ENCODE measurements at regions of chr18 and their contacts with region 1.

Region 1: DNA sequence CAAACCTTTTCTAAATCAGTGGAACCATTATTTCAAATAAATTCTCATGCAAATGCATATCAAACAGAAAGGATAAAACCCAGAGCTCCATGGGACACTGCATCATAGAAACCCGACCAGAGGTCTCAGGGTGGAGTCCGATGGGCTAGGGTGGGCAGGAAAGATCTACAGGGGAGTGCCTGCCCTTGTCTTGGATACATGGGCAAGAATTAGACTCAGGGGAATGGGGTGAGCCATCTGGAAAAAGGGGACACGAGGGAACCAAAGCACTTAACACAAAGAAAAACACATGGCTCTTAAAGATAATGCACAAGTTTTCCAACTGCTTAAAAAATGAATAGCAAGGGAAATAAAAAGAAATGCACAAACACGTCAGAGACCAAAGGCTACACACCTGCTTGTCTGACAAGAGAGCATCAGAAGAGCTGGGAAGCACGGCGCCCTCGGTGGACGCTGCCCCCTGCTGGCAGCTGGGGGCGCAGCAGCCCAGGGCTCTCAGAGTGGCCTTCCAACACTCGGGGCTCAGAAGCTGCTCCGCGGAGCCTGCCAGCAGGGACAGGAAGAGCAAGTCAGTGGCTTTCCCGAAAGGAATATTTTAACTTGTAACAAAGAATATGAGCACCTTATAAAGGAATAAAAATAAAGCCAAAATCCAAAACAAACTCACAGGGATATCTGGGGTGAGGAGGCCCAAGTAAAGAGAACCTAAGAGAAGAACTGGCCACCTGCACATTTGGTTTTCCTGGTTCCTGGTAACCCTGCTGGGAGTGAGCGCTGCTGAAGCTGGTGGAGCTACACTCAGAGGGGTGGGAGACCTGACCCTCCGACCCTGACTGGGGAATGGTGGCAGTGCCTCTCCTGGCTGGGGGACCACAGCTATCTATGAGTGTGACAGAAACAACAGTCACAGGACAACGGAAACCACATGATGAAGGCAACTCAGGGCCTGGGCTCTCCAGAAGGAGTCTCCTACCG is 54.5 kb downstream of the SIGLEC15 start:
- DNase-seq: peak; percentile 85
- ATAC-seq: peak; percentile 87
- H3K4me3 Mint-ChIP-seq: no peak overlapping the region
- H3K27ac Mint-ChIP-seq: no peak overlapping the region
- H3K4me1 Mint-ChIP-seq: peaks cover 10% of the 10 kb centered on the region
- H3K27me3 Mint-ChIP-seq: no peaks in the 10 kb centered on the region

Region 2: DNA sequence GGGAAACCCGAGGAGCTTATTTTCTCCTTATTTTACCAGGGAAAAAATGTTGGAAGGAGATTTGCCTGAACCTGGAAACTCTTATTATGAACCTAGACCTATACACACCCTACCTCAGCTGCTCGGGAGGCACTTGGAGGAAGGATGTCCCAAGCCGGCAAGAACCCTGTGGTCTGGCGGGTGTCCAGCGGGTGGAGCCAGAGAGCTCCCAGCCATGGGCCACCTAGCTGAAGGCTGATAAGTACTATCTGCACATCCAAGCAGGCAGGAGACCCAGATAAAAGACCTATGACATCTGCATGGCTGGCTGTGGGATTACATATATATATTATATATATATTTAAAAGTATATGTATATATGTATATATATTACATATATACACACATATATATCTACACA is 157.1 kb before region 1 on chr18:
- CTCF ChIA-PET with region 1: interaction called, 81 read pairs
- POLR2A ChIA-PET with region 1: no interaction called
- intact Hi-C with region 1: loop called (anchors 1 kb)
- DNase-seq: peak; percentile 89
- ATAC-seq: peak; percentile 97
- H3K4me3 Mint-ChIP-seq: no peak overlapping the region
- H3K27ac Mint-ChIP-seq: no peak overlapping the region
- H3K4me1 Mint-ChIP-seq: no peaks in the 10 kb centered on the region
- H3K27me3 Mint-ChIP-seq: no peaks in the 10 kb centered on the region

Region 3: GRCh38 chr18:45730832-45731575 is 149.0 kb before region 1 on chr18:
- CTCF ChIA-PET with region 1: interaction called, 81 read pairs
- POLR2A ChIA-PET with region 1: no interaction called
- intact Hi-C with region 1: no loop called
- DNase-seq: no peak
- ATAC-seq: no peak
- H3K4me3 Mint-ChIP-seq: no peak overlapping the region
- H3K27ac Mint-ChIP-seq: no peak overlapping the region
- H3K4me1 Mint-ChIP-seq: no peaks in the 10 kb centered on the region
- H3K27me3 Mint-ChIP-seq: no peaks in the 10 kb centered on the region

Region 4: GRCh38 chr18:45860971-45861370 is 19.0 kb before region 1 on chr18:
- CTCF ChIA-PET with region 1: interaction called, 18 read pairs
- POLR2A ChIA-PET with region 1: interaction called, 3 read pairs
- intact Hi-C with region 1: no loop called
- DNase-seq: no peak
- ATAC-seq: no peak
- H3K4me3 Mint-ChIP-seq: no peak overlapping the region
- H3K27ac Mint-ChIP-seq: no peak overlapping the region
- H3K4me1 Mint-ChIP-seq: peaks cover 8% of the 10 kb centered on the region
- H3K27me3 Mint-ChIP-seq: no peaks in the 10 kb centered on the region

Region 5: GRCh38 chr18:45896991-45897390 is 17.0 kb after region 1 on chr18:
- CTCF ChIA-PET with region 1: interaction called, 12 read pairs
- POLR2A ChIA-PET with region 1: no interaction called
- intact Hi-C with region 1: no loop called
- DNase-seq: no peak
- ATAC-seq: no peak
- H3K4me3 Mint-ChIP-seq: no peak overlapping the region
- H3K27ac Mint-ChIP-seq: no peak overlapping the region
- H3K4me1 Mint-ChIP-seq: peaks cover 2% of the 10 kb centered on the region
- H3K27me3 Mint-ChIP-seq: no peaks in the 10 kb centered on the region

Region 6: DNA sequence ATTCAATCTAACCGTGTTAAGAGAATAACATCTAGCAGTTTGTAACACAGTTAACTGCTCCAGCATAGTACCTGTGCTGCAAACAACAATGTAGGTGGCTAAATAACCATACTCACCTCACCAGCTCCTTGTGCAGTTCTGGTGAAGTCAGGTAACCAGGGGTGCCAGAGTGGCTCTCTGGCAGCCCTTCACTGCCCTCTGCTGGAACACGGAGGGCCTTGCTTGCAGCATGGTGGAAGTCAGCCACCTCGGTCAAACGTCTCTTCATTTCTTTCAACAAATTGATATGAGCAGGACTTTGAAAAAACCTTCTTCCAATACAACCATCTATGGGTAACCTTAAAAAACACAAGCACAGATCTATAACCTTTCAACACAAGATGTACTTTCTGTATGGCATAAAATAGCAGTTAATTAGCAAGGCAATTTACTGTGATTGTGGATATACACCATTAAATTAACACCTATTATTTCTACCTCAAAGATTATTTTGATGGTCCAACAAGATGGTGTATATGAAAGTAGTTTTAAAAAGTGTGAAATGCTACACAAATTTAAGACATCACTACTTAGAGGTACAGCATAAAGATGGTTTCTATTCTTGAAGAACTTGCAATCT is 30.5 kb after region 1 on chr18:
- CTCF ChIA-PET with region 1: interaction called, 16 read pairs
- POLR2A ChIA-PET with region 1: no interaction called
- intact Hi-C with region 1: no loop called
- DNase-seq: peak; percentile 81
- ATAC-seq: peak; percentile 89
- H3K4me3 Mint-ChIP-seq: no peak overlapping the region
- H3K27ac Mint-ChIP-seq: no peak overlapping the region
- H3K4me1 Mint-ChIP-seq: no peaks in the 10 kb centered on the region
- H3K27me3 Mint-ChIP-seq: no peaks in the 10 kb centered on the region

Region 7: DNA sequence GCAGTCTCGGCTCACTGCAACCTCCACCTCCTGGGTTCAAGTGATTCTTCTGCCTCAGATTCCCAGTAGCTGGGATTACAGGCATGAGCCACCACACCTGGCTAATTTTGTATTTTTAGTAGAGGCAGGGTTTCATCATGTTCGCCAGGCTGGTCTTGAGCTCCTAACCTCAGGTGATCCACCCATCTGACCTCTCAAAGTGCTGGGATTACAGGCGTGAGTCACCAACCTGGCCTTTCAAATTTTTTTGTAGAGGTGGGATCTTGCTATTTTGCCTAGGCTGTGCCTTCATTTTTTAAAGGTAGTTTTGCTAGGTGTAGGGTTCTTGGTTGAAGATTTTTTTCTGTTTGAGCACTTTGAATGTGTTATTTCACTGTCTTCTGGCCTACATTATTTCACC is 230.4 kb after region 1 on chr18:
- CTCF ChIA-PET with region 1: no interaction called
- POLR2A ChIA-PET with region 1: no interaction called
- intact Hi-C with region 1: no loop called
- DNase-seq: no peak
- ATAC-seq: no peak
- H3K4me3 Mint-ChIP-seq: no peak overlapping the region
- H3K27ac Mint-ChIP-seq: no peak overlapping the region
- H3K4me1 Mint-ChIP-seq: peaks cover 25% of the 10 kb centered on the region
- H3K27me3 Mint-ChIP-seq: no peaks in the 10 kb centered on the region

Region 8: GRCh38 chr18:46250084-46250811 is 370.3 kb after region 1 on chr18:
- CTCF ChIA-PET with region 1: no interaction called
- POLR2A ChIA-PET with region 1: no interaction called
- intact Hi-C with region 1: loop called in 1 of 2 experiments (anchors 10 kb)
- DNase-seq: peak; percentile 61
- ATAC-seq: peak; percentile 90
- H3K4me3 Mint-ChIP-seq: peak overlapping the region; percentile 62
- H3K27ac Mint-ChIP-seq: peak overlapping the region; percentile 97
- H3K4me1 Mint-ChIP-seq: peaks cover 64% of the 10 kb centered on the region
- H3K27me3 Mint-ChIP-seq: no peaks in the 10 kb centered on the region